ENCODE measurements at regions of chr11 and their contacts with region 1.

Region 1: DNA sequence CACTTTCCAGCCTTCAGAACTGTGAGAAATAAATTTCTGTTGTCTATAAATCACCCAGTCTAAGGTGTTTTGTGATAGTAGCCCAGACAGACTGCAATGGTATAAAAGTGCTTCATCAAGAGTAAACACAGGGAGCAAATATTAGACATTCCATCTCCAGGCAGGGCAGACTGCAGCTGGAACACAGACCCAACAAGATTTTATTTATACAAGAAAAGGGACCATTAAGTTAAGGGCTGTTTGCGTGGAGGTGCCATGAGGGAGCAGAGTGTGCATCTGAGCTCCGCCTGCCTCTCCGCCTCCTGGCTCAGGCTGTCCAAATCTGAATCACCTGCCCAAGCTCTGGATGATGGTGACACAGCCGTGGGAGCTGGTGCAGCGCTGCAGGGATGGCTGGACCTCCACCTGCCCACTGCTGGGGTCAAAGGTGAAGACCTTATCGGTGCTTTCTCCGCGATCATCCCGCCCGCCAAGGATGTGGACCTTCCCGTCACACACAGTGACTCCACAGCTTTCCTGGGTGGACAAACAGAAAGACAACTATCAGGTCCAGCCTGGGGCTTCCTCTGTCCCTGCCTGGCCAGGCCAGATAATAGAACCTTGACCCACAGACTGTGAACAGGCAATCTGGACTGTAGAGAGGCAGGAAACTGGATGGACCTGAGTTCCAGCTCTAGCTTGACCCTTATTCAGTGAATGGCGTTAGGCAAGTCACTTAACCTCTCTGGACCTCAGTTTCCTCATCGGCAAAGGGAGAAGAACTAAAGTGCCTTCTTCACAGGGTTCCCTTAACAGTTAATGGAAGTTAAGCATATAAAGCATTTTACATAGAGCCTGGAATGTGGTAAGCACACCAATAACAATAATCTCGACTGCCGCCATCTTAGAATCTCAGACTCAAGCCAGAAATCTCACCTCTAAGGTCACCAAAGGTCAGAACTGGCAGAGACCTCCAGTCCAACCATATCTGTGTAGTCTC is 10.5 kb downstream of the KLHL35 start:
- DNase-seq: no peak
- H3K4me3 ChIP-seq: no peak overlapping the region
- H3K27ac ChIP-seq: no peak overlapping the region
- H3K4me1 ChIP-seq: peaks cover 0 to 5% (median 3%) of the 10 kb centered on the region in 4 experiments; a peak in 3 of 7 replicates
- H3K27me3 ChIP-seq: peaks cover 1 to 8% (median 5%) of the 10 kb centered on the region in 4 experiments; a peak in 5 of 7 replicates
- CTCF ChIP-seq: no peak
- EP300 ChIP-seq: no peak
- POLR2A ChIP-seq: no peak
- RAD21 ChIP-seq: no peak

Region 2: DNA sequence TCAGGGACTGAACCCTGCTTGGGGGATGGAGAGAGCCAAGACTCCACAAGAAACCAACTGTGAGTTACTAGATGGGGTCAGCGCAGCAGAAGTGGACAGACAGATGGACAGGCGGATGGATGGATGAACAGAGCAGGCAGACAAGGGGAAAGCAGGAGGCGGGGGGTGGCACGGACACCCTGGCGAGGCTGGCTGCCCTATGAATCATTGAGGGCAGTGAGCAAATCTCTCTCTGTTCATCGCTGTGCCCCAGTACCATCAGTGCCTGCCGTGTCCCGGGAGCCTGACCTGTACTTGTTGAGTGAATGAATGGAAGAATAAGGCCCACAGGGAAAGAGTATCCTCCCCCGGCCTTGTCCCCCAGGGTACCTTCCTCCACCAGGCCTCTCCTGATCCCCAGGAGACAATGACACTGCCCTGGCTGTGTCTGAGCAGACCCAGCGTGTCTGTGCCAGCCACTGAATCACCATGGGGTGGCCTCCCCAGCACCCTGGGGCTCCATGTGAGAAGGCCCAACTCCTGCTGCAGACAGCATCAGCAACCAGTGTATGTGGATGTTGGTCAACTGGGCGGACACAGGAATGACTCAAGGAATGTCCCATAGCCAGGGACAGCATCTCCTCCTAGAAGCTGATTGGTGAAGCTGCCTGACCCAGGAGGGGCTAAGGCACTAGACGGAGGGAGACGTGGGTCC is 15.6 kb after region 1 on chr11:
- CTCF ChIA-PET with region 1: interaction called, 133 read pairs
- POLR2A ChIA-PET with region 1: interaction called, 7 read pairs
- DNase-seq: no peak
- H3K4me3 ChIP-seq: no peak overlapping the region
- H3K27ac ChIP-seq: no peak overlapping the region
- H3K4me1 ChIP-seq: peaks cover 0 to 21% (median 6%) of the 10 kb centered on the region in 4 experiments; a peak in 5 of 7 replicates
- H3K27me3 ChIP-seq: peaks cover 0 to 9% (median 4%) of the 10 kb centered on the region in 4 experiments; a peak in 4 of 7 replicates
- CTCF ChIP-seq: no peak
- EP300 ChIP-seq: no peak
- POLR2A ChIP-seq: no peak
- RAD21 ChIP-seq: no peak

Measured in H1 (cell line).